Sigmoid colon (tissue), 7 donors: ENCODE measurements at regions of chr15 and their contacts with region 1.

Region 1: GRCh38 chr15:52139599-52140491 is 27.3 kb upstream of the BCL2L10 start:
- DNase-seq: peak; percentile 85
- H3K4me3 ChIP-seq: no peak overlapping the region
- H3K27ac ChIP-seq: no peak overlapping the region
- H3K4me1 ChIP-seq: peaks cover 0 to 26% (median 18%) of the 10 kb centered on the region in 4 donors
- H3K27me3 ChIP-seq: no peaks in the 10 kb centered on the region
- CTCF ChIP-seq: peak in 3 of 4 experiments; percentile 50 to 70 (median 60)
- EP300 ChIP-seq: no peak
- POLR2A ChIP-seq: no peak

Region 2: GRCh38 chr15:51888593-51889195 is 251.2 kb before region 1 on chr15:
- intact Hi-C with region 1: loop called (anchors 5 kb)
- DNase-seq: no peak
- H3K4me3 ChIP-seq: no peak overlapping the region
- H3K27ac ChIP-seq: no peak overlapping the region
- H3K4me1 ChIP-seq: peaks cover 0 to 17% (median 14%) of the 10 kb centered on the region in 4 donors
- H3K27me3 ChIP-seq: no peaks in the 10 kb centered on the region
- CTCF ChIP-seq: peak in 3 of 4 experiments; percentile 39 to 72 (median 63)
- EP300 ChIP-seq: no peak
- POLR2A ChIP-seq: no peak

Region 3: GRCh38 chr15:51971375-51972133 is 168.3 kb before region 1 on chr15 and contains the start of gene LEO1:
- intact Hi-C with region 1: loop called (anchors 5 kb)
- DNase-seq: peak; percentile 96
- H3K4me3 ChIP-seq: peak within 1 kb of the TSS; percentile 60 to 75 (median 74)
- H3K27ac ChIP-seq: peak within 1 kb of the TSS; percentile 86 to 90 (median 88)
- H3K4me1 ChIP-seq: peaks cover 0 to 18% (median 11%) of the 10 kb centered on the region in 4 donors
- H3K27me3 ChIP-seq: no peaks in the 10 kb centered on the region
- CTCF ChIP-seq: peak; percentile 35 to 44 (median 36)
- EP300 ChIP-seq: no peak
- POLR2A ChIP-seq: peak; percentile 43 to 49
- total RNA-seq, gene LEO1: 7.4 to 15.3 (median 13.0) TPM

Region 4: DNA sequence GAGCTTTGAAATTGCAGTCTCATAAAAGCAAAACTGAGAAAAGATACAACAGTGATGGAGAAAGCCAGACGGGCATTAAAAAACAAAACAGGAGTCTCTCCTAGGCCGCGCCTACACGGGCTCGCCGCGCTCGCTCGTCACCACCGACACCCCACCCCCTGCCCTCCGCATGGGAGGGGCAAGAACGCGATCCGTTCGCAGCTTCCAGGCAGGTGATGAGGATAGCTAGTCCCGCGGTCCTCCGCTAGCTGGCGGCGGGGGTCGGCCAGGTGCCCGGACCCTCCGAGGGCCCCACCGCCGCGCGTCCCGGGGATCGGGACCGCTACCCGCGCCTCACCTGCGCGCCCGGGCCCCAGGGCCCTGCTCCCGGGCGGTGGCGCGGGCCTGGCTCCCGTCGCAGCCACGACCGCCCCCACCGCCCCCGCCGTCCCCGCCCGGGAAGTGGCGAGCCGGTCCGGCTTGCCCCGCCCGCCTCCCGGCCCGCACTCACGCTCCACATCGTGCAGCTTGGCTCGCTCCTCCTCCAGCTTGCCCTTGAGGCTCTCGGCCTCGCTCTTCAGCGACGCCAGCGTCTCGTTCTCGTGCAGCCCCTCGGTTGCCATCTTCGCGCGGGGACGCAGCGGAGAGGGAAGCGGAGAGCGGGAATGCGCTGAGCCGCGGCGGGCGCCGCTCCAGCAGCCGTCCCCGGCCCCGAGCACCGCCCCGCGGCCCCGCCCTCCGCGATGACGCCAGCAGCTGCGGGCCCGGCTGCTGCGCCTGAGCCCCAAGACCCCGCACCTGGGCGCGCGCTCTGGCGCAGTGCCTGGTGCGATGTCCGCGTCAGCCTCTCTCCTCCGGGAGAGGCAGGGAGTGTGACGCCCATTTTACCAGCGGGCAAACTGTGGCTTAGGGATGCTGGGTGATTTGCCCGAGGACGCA is 39.7 kb after region 1 on chr15:
- intact Hi-C with region 1: loop called (anchors 5 kb)
- DNase-seq: peak; percentile 95
- H3K4me3 ChIP-seq: peak overlapping the region; percentile 64 to 77 (median 68)
- H3K27ac ChIP-seq: peak overlapping the region; percentile 84 to 89 (median 89)
- H3K4me1 ChIP-seq: peaks cover 0 to 14% (median 12%) of the 10 kb centered on the region in 4 donors
- H3K27me3 ChIP-seq: no peaks in the 10 kb centered on the region
- CTCF ChIP-seq: no peak
- EP300 ChIP-seq: peak in 1 of 4 donors; percentile 9
- POLR2A ChIP-seq: no peak